ENCODE measurements at regions of chr11 and their contacts with region 1.

Region 1: DNA sequence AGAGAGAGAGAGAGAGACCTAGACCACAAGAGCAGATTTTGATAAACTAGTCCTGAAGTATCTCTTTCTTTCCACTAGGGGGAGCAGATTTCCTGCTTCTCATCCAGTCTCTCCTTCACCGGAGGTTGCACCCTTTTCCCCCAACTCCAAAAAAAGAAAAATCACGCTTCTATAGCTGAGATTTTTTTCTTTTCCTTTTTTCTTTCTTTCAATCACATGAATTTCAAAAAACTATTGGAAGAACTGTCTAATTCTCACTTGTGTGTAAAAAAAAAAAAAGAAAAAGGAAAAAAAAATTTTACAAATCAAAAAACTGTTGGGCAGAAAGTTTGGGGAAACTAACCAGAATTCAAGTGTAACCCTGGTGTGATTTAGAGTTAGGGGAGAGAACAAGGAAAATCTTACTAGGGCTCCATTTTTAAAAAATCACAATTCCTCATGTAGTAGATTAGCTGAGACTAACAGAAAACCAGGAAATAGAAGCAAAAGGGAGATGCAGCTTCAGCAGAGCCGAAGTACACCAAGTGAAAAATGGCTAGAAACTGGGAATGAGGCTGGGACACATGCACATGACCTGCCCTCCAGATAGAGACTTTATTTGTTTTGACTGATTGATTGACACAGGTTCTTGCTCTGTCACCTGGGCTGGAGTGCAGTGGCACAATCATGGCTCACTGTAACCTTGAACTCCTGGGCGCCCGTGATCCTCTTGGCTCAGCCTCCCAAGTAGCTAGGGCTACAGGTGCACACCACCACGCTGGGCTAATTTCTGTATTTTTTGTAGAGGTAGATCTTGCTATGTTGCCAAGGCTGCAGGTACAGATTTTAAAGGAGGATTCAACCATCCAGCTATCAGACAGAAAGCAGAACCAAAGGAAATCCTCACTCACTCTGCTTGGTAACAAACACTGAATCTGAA is 27.1 kb downstream of the SDHD start:
- DNase-seq: no peak
- H3K4me3 Mint-ChIP-seq: no peak overlapping the region
- H3K27ac Mint-ChIP-seq: no peak overlapping the region
- H3K4me1 Mint-ChIP-seq: peaks cover 2% of the 10 kb centered on the region
- H3K27me3 Mint-ChIP-seq: no peaks in the 10 kb centered on the region

Region 2: DNA sequence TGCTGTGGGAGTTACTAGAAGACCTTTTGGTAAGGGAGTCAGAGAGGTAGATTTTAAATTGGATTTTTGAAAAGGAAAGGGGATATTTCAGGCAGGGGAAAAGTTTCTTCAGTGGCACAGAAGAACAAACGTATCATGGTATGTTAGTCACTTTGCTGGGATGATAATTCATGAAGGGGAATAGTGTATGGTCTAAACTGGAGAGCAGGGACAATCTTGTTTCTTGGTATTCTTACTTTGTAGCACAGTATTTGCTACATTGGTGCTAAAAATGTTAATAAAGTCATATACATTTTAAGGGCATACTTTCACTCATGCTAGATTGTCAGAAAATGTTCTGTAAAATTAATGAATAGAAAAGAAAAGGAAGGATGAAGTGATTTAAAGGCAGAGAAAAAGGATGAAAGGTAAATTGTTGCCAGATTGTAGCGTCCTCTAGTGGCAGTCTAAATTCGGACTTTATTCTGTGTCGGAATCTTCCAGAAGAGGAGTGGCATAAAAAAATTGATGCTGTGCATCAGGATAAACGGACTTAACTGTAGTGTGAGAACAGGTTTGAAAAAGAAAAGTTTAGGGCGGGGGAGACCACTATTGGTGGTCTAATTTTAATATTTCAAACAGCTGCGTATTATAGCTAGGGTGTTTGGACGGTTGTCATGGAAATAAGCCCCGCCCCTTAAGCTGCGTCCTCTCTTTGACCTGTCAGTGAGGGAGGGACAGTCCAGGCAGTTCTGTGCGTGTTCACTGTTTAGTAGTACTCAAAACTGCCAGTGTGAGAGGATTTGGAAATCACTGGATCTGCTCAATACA is 61.2 kb after region 1 on chr11 and contains the start of gene BCO2:
- CTCF ChIA-PET with region 1: interaction called, 21 read pairs
- POLR2A ChIA-PET with region 1: no interaction called
- intact Hi-C with region 1: loop called (anchors 1 kb)
- DNase-seq: peak; percentile 60
- H3K4me3 Mint-ChIP-seq: peak within 1 kb of the TSS; percentile 50
- H3K27ac Mint-ChIP-seq: no peak within 1 kb of the TSS
- H3K4me1 Mint-ChIP-seq: peaks cover 11% of the 10 kb centered on the region
- H3K27me3 Mint-ChIP-seq: peaks cover 16% of the 10 kb centered on the region
- total RNA-seq, gene BCO2: 0.73 to 1.3 TPM

Region 3: GRCh38 chr11:112302231-112302732 is 188.5 kb after region 1 on chr11:
- CTCF ChIA-PET with region 1: no interaction called
- POLR2A ChIA-PET with region 1: no interaction called
- intact Hi-C with region 1: no loop called
- DNase-seq: no peak
- H3K4me3 Mint-ChIP-seq: no peak overlapping the region
- H3K27ac Mint-ChIP-seq: no peak overlapping the region
- H3K4me1 Mint-ChIP-seq: peaks cover 21% of the 10 kb centered on the region
- H3K27me3 Mint-ChIP-seq: no peaks in the 10 kb centered on the region

Region 4: GRCh38 chr11:112321521-112322172 is 207.8 kb after region 1 on chr11:
- CTCF ChIA-PET with region 1: no interaction called
- POLR2A ChIA-PET with region 1: no interaction called
- intact Hi-C with region 1: no loop called
- DNase-seq: peak; percentile 22
- H3K4me3 Mint-ChIP-seq: no peak overlapping the region
- H3K27ac Mint-ChIP-seq: peak overlapping the region; percentile 38
- H3K4me1 Mint-ChIP-seq: peaks cover 19% of the 10 kb centered on the region
- H3K27me3 Mint-ChIP-seq: no peaks in the 10 kb centered on the region

Measured in activated CD4-positive, alpha-beta memory T cell treated with anti-CD3 and anti-CD28 coated beads for 36 hours (primary cell).